Calu3 (cell line): ENCODE measurements at regions of chr14 and their contacts with region 1.

Region 1: DNA sequence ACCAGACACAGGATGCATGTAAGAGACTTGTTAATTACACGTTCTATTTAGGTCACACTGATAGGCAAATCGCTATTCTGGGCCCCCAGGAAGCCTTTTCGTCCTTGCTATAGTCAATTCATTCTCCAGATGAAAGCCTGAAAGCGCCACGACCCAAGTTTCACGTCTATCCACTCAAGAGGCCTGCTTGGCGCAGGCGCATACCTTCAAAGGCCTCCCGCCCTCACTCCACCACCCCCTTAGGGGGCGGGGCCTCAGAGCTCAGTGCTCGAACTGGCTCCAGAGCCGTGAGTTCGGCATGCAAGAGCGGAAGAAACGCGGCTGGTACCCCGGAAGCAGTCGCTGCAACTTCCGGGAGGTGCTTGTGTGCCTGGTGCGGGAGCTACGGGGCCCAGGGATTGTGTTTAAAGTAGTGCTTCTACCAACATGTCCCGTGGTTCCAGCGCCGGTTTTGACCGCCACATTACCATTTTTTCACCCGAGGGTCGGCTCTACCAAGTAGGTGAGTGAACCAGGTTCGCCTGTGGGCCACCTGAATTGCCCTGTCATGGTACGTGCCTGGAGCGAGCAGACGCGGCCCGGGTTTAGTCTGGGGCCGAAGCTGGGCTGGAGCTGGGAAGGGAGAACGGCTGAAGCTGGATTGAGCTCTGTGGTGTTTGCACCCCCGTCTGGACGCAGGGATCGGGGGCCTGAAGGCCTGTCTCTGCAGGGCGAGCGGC is at the start of gene PSMA6:
- DNase-seq: peak; percentile 98
- H3K4me3 Mint-ChIP-seq: peak within 1 kb of the TSS; percentile 87
- H3K27ac Mint-ChIP-seq: peak within 1 kb of the TSS; percentile 78
- H3K4me1 Mint-ChIP-seq: peaks cover 24% of the 10 kb centered on the region
- H3K27me3 Mint-ChIP-seq: no peaks in the 10 kb centered on the region
- CTCF ChIP-seq: no peak
- total RNA-seq, gene PSMA6: 297 and 341 TPM in 2 replicates

Region 2: DNA sequence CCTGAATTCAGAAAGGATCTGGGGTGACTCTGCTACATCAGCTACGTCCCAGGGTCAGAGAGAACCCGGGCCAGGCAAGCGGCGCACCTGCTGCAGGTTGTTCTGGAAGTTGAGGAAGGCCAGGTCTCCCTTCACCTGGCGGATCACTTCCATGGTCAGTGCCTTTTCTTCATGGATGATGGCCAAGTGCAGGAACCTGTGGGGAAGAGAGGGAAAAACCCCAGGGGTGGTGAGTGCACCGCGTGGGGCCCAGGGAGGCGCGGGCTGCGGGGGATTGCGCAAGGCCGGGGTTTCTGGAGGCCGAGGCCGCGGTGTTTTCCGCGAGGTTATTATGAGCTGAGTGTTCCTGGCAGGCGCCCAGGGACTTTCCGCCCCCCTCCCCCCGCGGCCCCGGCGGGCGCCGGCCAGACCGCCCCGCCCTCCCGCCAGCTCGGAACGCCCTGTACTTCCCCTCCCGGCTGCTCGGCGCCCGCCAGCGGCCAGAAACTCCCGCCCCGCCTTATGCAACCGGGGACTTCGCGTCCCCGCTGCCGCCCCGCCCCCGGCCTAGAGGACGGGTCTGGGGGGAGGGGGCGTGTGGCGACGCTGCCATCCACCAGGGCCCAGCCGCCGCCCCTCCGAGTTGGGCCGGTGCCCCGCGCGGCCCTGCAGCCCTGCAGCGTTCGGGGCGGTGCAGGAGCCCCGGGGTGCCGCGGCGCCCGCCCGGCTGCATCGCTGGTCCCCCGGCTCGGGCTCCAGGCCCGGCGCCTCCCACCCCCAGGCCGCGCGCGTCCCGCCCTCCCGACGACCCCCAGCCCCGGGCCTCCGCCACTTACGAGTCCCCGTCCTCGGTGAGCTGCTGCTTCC is 111.6 kb after region 1 on chr14:
- CTCF ChIA-PET with region 1: interaction called, 5 read pairs
- intact Hi-C with region 1: loop called (anchors 2 kb)
- DNase-seq: peak; percentile 97
- H3K4me3 Mint-ChIP-seq: peak overlapping the region; percentile 93
- H3K27ac Mint-ChIP-seq: peak overlapping the region; percentile 96
- H3K4me1 Mint-ChIP-seq: peaks cover 32% of the 10 kb centered on the region
- H3K27me3 Mint-ChIP-seq: no peaks in the 10 kb centered on the region
- CTCF ChIP-seq: no peak